ENCODE measurements at regions of chr6 and their contacts with region 1.

Region 1: DNA sequence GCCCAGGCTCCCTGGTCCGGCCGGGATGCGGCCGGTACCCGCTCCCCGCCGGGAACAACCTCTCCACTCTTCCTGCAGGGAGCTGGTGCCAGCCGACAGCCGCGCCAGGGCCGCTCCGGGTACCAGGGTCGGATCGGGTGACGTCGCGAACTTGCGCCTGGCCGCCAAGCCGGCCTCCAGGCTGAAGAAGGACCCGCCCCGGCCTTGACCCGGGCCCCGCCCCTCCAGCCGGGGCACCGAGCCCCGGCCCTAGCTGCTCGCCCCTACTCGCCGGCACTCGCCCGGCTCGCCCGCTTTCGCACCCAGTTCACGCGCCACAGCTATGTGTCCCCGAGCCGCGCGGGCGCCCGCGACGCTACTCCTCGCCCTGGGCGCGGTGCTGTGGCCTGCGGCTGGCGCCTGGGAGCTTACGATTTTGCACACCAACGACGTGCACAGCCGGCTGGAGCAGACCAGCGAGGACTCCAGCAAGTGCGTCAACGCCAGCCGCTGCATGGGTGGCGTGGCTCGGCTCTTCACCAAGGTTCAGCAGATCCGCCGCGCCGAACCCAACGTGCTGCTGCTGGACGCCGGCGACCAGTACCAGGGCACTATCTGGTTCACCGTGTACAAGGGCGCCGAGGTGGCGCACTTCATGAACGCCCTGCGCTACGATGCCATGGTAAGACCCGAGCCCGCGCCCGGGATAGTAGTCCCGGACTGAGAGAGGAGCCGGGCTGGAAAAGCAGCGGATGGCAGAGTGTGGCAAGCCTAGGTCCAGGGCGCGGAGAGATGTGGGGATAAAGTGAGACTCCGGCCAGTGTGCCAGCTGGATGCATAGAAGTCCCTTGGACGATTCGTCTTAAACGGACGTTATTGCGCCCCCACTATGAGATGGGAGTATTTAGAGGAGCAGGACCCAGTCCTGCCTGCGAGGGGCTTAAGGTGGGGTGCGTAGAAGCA is at the start of gene NT5E:
- DNase-seq: peak; percentile 69
- H3K27ac ChIP-seq: peak within 1 kb of the TSS; percentile 95
- CTCF ChIP-seq: no peak

Region 2: DNA sequence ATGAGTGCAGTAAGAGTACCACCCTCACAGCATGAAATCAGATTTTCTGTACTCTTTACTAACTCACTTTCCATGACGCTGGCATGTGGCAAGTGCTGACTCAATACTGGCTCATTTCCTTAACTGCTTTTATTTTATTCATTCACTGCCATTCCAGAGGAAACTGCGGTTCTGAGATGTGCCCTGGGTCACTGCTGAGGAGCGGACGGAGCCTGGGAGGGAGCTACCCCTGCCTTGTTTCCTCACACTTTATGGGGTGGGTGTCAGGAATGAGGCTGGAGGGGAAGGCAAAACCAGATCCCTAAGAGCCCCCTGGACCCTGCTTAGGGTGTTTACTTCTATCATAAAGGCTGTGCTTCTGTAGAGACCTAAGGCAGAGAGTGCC is 14.2 kb after region 1 on chr6:
- CTCF ChIA-PET with region 1: interaction called, 6 read pairs
- POLR2A ChIA-PET with region 1: interaction called, 24 read pairs
- DNase-seq: peak; percentile 85
- H3K27ac ChIP-seq: peak overlapping the region; percentile 89
- CTCF ChIP-seq: no peak

Region 3: DNA sequence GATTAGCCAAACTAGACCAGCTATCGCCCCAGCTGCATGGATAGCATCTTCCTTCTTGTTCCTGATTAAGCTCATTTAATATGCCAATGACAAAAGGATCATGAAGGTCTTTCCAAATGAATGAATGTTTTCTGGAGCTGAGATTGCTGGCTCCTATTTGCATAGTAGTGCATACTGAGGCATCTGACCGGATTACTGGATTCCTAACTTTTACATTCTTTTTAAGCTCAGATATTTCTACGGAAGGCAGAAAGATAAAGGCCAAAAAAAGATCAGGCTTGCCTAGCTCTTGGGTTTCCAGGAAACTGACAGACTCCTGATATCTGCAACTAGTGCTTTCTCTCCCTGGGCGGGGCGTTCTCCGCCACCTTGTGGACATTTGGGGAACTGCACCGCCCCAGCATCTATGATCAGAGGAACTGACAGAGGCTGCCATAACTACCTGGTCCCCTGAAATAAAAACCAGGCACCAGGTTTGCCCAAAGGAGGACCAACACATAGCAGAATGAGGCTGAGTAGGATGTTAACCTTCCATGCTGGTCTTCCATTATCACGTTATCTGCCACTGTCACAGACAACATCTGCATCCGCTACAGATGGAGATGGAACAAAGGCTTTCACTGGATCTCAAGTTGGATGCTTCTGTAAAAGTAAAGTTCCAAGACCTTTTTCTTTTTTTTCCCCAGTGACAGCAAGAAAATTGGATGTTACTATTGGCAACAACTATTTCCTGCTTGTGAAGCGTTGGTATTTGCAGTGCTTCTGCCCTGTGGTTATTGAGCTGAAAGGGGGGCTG is 33.0 kb after region 1 on chr6:
- CTCF ChIA-PET with region 1: interaction called, 39 read pairs
- POLR2A ChIA-PET with region 1: no interaction called
- DNase-seq: peak; percentile 64
- H3K27ac ChIP-seq: no peak overlapping the region; the same call in 1 of the 2 replicates
- CTCF ChIP-seq: peak; percentile 99

Region 4: GRCh38 chr6:85516168-85516567 is 66.1 kb after region 1 on chr6:
- CTCF ChIA-PET with region 1: no interaction called
- POLR2A ChIA-PET with region 1: no interaction called
- DNase-seq: peak; percentile 62
- H3K27ac ChIP-seq: no peak overlapping the region
- CTCF ChIP-seq: no peak

Region 5: GRCh38 chr6:85703406-85703805 is 253.3 kb after region 1 on chr6:
- CTCF ChIA-PET with region 1: no interaction called
- POLR2A ChIA-PET with region 1: no interaction called
- DNase-seq: no peak
- H3K27ac ChIP-seq: no peak overlapping the region
- CTCF ChIP-seq: no peak